K562 (cell line): ENCODE measurements at regions of chr6 and their contacts with region 1.

Region 1: GRCh38 chr6:68967549-68968300 is 332.6 kb downstream of the ADGRB3 start:
- DNase-seq: peak; percentile 71 to 83 (median 72)
- ATAC-seq: peak; percentile 93
- H3K4me3 ChIP-seq: peak overlapping the region; percentile 14
- H3K27ac ChIP-seq: peak overlapping the region; percentile 84
- H3K4me1 ChIP-seq: peaks cover 5 to 12% of the 10 kb centered on the region in 2 experiments; a peak in 4 of 5 replicates
- H3K27me3 ChIP-seq: no peaks in the 10 kb centered on the region
- CTCF ChIP-seq: peak; percentile 77 to 88 (median 84)
- EP300 ChIP-seq: no peak; the same call in 1 of the 2 replicates
- POLR2A ChIP-seq: no peak
- RAD21 ChIP-seq: peak; percentile 62 to 71

Region 2: GRCh38 chr6:68343901-68344300 is 623.8 kb before region 1 on chr6:
- CTCF ChIA-PET with region 1: interaction called, 4 read pairs
- POLR2A ChIA-PET with region 1: no interaction called
- in situ Hi-C with region 1: no loop called
- intact Hi-C with region 1: loop called (anchors 10 kb)
- DNase-seq: peak; percentile 53 to 82 (median 62)
- ATAC-seq: peak; percentile 99
- H3K4me3 ChIP-seq: no peak overlapping the region
- H3K27ac ChIP-seq: no peak overlapping the region
- H3K4me1 ChIP-seq: no peaks in the 10 kb centered on the region
- H3K27me3 ChIP-seq: no peaks in the 10 kb centered on the region
- CTCF ChIP-seq: peak; percentile 84 to 97 (median 97)
- EP300 ChIP-seq: no peak
- POLR2A ChIP-seq: no peak
- RAD21 ChIP-seq: peak; percentile 85 to 88

Region 3: DNA sequence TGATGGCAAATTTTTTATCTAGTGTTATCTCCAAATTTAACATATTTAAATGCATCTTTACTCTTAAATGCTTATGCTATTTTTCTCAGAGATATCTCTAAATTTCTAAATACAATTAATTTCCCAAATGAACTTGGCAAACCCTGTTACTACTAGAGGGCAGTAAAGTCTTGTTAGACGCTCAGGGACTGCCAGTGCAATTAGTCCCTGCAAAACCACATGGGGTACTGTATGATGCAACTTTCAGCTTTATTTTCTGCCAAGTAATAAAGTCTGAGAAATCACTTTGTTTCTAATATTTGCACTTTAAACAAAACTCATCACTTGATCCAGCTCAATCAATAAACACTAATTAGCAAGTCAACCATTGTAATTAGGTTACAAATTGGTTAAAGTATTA is 408.7 kb before region 1 on chr6:
- CTCF ChIA-PET with region 1: no interaction called
- POLR2A ChIA-PET with region 1: no interaction called
- in situ Hi-C with region 1: no loop called
- intact Hi-C with region 1: loop called (anchors 5 kb)
- DNase-seq: peak in 2 of 4 experiments; percentile 9 to 24
- ATAC-seq: peak; percentile 91
- H3K4me3 ChIP-seq: no peak overlapping the region
- H3K27ac ChIP-seq: no peak overlapping the region
- H3K4me1 ChIP-seq: no peaks in the 10 kb centered on the region
- H3K27me3 ChIP-seq: no peaks in the 10 kb centered on the region
- CTCF ChIP-seq: peak in 2 of 3 experiments; percentile 36 to 45; a peak in 3 of 6 replicates
- EP300 ChIP-seq: no peak
- POLR2A ChIP-seq: no peak
- RAD21 ChIP-seq: peak; percentile 32 to 49; a peak in 3 of 4 replicates

Region 4: GRCh38 chr6:68572525-68572924 is 395.2 kb before region 1 on chr6:
- CTCF ChIA-PET with region 1: no interaction called
- POLR2A ChIA-PET with region 1: no interaction called
- in situ Hi-C with region 1: no loop called
- intact Hi-C with region 1: loop called (anchors 5 kb)
- DNase-seq: peak; percentile 51 to 83 (median 62)
- ATAC-seq: peak; percentile 92
- H3K4me3 ChIP-seq: no peak overlapping the region
- H3K27ac ChIP-seq: no peak overlapping the region
- H3K4me1 ChIP-seq: no peaks in the 10 kb centered on the region
- H3K27me3 ChIP-seq: no peaks in the 10 kb centered on the region
- CTCF ChIP-seq: peak; percentile 80 to 95 (median 94)
- EP300 ChIP-seq: no peak
- POLR2A ChIP-seq: no peak
- RAD21 ChIP-seq: peak; percentile 76 to 89

Region 5: DNA sequence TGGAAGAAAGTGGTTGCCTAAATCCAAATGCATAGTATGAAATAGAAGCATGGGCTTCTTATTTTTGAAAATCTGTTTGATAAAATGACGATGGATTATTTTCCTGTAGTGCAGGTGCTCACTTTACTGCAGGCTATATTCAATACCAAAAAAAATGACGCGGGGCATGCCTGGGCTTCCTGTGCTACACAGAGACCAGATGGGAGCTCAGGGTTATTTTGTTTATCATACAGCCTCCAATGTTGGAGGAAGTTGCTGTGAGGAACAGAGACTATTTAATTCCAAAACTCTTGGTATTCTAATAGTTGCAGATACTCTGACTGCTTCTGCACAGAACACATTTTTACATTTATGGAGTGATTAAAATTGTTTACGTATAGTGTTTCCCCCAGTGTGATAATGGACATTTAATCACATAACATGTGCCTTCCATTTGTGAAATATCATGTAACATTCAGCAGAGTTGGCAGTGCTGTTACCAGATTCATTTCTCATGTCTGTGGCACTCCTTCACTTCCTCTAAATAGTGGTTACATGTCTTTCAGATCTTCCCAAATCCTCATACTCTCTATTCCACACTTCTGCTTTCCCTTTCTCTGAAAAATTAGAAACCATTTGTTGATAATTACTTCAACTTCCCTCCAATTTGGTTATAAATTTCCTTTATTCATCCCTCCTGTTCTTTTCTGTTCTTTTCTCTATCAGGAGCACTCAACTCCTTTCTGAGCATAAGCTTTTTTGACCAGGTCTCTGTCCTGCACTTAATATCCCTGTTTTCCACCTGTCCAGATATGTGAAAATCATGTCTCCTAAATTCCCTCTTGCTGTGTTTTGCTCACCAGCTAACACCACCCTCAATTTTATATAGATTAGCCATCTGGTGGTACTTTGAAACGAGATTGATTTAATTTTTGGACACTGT is 211.0 kb before region 1 on chr6:
- CTCF ChIA-PET with region 1: no interaction called
- POLR2A ChIA-PET with region 1: no interaction called
- in situ Hi-C with region 1: no loop called
- intact Hi-C with region 1: no loop called
- DNase-seq: no peak
- ATAC-seq: peak; percentile 16; the same call in 2 of the 3 replicates
- H3K4me3 ChIP-seq: no peak overlapping the region
- H3K27ac ChIP-seq: peak overlapping the region; percentile 31; the same call in 1 of the 3 replicates
- H3K4me1 ChIP-seq: peaks cover 0 to 19% of the 10 kb centered on the region in 2 experiments; a peak in 2 of 5 replicates
- H3K27me3 ChIP-seq: no peaks in the 10 kb centered on the region
- CTCF ChIP-seq: no peak
- EP300 ChIP-seq: no peak
- POLR2A ChIP-seq: no peak
- RAD21 ChIP-seq: no peak

Region 6: DNA sequence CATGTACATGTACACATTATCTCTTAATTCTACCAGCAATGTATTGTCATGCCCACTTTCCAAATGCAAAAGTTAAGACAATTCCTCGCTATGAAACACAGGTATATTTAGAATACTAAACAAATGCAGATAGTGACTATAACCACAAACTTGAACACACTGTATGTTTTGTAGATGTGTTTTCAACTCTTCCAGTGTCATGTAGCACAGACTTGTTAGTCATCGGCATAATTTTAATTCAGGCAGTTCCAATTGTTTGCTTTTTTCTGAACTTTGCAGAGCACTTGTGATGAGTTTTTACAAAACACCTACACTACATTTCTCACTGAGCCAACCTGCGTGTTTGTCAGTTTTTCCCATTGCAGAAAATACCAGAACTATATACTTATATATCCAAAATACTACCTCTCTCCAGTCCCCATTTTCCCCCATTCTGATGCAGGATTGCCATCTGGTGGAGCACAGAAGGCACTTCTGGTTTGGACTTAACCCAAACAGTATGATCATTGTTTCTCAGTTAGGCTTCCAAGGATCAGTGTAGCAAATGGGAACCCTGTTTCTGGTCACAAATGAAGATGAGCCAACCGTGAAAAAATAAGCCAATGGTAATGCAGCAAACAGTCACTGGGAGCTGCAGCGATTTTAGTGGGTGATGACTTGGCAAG is 189.2 kb before region 1 on chr6:
- CTCF ChIA-PET with region 1: no interaction called
- POLR2A ChIA-PET with region 1: no interaction called
- in situ Hi-C with region 1: no loop called
- intact Hi-C with region 1: loop called (anchors 1 kb)
- DNase-seq: peak; percentile 36 to 76 (median 47)
- ATAC-seq: peak; percentile 87
- H3K4me3 ChIP-seq: no peak overlapping the region
- H3K27ac ChIP-seq: no peak overlapping the region
- H3K4me1 ChIP-seq: 0 out of 5 replicates have a peak, but pooled peaks cover 0 to 3% of the 10 kb centered on the region in 2 experiments
- H3K27me3 ChIP-seq: no peaks in the 10 kb centered on the region
- CTCF ChIP-seq: peak; percentile 78 to 93 (median 86)
- EP300 ChIP-seq: no peak
- POLR2A ChIP-seq: no peak
- RAD21 ChIP-seq: peak; percentile 97

Region 7: GRCh38 chr6:68834551-68834950 is 133.2 kb before region 1 on chr6:
- CTCF ChIA-PET with region 1: no interaction called
- POLR2A ChIA-PET with region 1: no interaction called
- in situ Hi-C with region 1: no loop called
- intact Hi-C with region 1: loop called (anchors 5 kb)
- DNase-seq: peak in 1 of 4 experiments; percentile 54
- ATAC-seq: peak; percentile 82
- H3K4me3 ChIP-seq: no peak overlapping the region
- H3K27ac ChIP-seq: peak overlapping the region; percentile 46; the same call in 1 of the 3 replicates
- H3K4me1 ChIP-seq: no peaks in the 10 kb centered on the region
- H3K27me3 ChIP-seq: no peaks in the 10 kb centered on the region
- CTCF ChIP-seq: no peak
- EP300 ChIP-seq: no peak
- POLR2A ChIP-seq: no peak
- RAD21 ChIP-seq: no peak

Region 8: GRCh38 chr6:68876792-68877493 is 90.8 kb before region 1 on chr6:
- CTCF ChIA-PET with region 1: interaction called, 10 read pairs
- POLR2A ChIA-PET with region 1: no interaction called
- in situ Hi-C with region 1: no loop called
- intact Hi-C with region 1: loop called (anchors 1 kb)
- DNase-seq: peak in 2 of 4 experiments; percentile 15 to 39
- ATAC-seq: no peak; the same call in 2 of the 3 replicates
- H3K4me3 ChIP-seq: no peak overlapping the region
- H3K27ac ChIP-seq: no peak overlapping the region
- H3K4me1 ChIP-seq: no peaks in the 10 kb centered on the region
- H3K27me3 ChIP-seq: no peaks in the 10 kb centered on the region
- CTCF ChIP-seq: peak in 1 of 3 experiments; percentile 59; a peak in 2 of 6 replicates
- EP300 ChIP-seq: no peak
- POLR2A ChIP-seq: no peak
- RAD21 ChIP-seq: peak; percentile 43 to 58

Region 9: GRCh38 chr6:68901044-68901443 is 66.7 kb before region 1 on chr6:
- CTCF ChIA-PET with region 1: no interaction called
- POLR2A ChIA-PET with region 1: no interaction called
- in situ Hi-C with region 1: no loop called
- intact Hi-C with region 1: no loop called
- DNase-seq: peak in 3 of 4 experiments; percentile 5 to 74 (median 32)
- ATAC-seq: peak; percentile 93
- H3K4me3 ChIP-seq: no peak overlapping the region
- H3K27ac ChIP-seq: peak overlapping the region; percentile 8; the same call in 1 of the 3 replicates
- H3K4me1 ChIP-seq: peaks cover 0 to 9% of the 10 kb centered on the region in 2 experiments; a peak in 1 of 5 replicates
- H3K27me3 ChIP-seq: no peaks in the 10 kb centered on the region
- CTCF ChIP-seq: no peak
- EP300 ChIP-seq: no peak
- POLR2A ChIP-seq: no peak
- RAD21 ChIP-seq: no peak

Region 10: DNA sequence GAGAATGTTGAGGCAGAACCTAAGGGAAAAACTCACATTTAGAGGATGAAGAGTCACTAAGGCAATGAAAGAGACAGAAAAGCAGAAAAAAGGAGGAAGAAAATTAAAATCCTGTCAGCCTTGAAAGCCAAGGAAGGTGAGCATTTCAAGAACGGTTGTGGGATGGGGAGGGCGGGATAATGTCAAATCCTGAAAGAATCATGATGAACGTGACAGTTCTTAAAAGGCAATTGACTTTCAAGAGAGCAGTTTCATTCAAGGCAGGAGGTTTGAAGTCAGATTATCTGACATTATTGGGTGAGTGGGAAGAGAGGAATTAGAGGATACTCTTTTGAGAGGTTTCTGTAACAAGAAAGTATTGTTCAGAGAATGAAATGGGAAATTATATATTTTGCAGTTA is 48.2 kb before region 1 on chr6:
- CTCF ChIA-PET with region 1: no interaction called
- POLR2A ChIA-PET with region 1: no interaction called
- in situ Hi-C with region 1: no loop called
- intact Hi-C with region 1: no loop called
- DNase-seq: no peak
- ATAC-seq: no peak
- H3K4me3 ChIP-seq: no peak overlapping the region
- H3K27ac ChIP-seq: no peak overlapping the region
- H3K4me1 ChIP-seq: no peaks in the 10 kb centered on the region
- H3K27me3 ChIP-seq: no peaks in the 10 kb centered on the region
- CTCF ChIP-seq: no peak
- EP300 ChIP-seq: no peak
- POLR2A ChIP-seq: no peak
- RAD21 ChIP-seq: no peak

Region 11: GRCh38 chr6:69019832-69020231 is 52.1 kb after region 1 on chr6:
- CTCF ChIA-PET with region 1: no interaction called
- POLR2A ChIA-PET with region 1: no interaction called
- in situ Hi-C with region 1: no loop called
- intact Hi-C with region 1: no loop called
- DNase-seq: no peak
- ATAC-seq: no peak
- H3K4me3 ChIP-seq: no peak overlapping the region
- H3K27ac ChIP-seq: no peak overlapping the region
- H3K4me1 ChIP-seq: no peaks in the 10 kb centered on the region
- H3K27me3 ChIP-seq: no peaks in the 10 kb centered on the region
- CTCF ChIP-seq: no peak
- EP300 ChIP-seq: no peak
- POLR2A ChIP-seq: no peak
- RAD21 ChIP-seq: no peak